RWPE1 (cell line): ENCODE measurements at regions of chr7 and their contacts with region 1.

Region 1: DNA sequence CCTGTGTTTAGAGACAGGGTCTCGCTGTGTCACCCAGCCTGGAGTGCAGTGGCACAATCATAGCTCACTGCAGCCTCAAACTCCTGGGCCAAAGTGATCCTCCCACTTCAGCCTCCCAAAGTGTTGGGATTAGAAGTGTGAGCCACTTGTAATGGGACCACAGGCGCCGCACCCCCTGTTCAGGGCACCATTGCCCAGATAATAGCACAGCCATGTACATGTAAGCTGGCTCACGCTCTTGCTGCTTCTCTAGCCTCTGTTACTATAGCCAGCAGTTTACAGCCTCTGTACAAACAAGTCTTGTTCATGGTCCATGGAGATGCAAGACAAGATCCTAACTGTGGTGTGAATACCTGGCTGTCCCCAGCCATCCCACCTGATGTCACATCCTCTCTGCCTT is 4.2 kb upstream of the MLXIPL start:
- DNase-seq: no peak
- H3K27ac ChIP-seq: no peak overlapping the region
- CTCF ChIP-seq: no peak

Region 2: DNA sequence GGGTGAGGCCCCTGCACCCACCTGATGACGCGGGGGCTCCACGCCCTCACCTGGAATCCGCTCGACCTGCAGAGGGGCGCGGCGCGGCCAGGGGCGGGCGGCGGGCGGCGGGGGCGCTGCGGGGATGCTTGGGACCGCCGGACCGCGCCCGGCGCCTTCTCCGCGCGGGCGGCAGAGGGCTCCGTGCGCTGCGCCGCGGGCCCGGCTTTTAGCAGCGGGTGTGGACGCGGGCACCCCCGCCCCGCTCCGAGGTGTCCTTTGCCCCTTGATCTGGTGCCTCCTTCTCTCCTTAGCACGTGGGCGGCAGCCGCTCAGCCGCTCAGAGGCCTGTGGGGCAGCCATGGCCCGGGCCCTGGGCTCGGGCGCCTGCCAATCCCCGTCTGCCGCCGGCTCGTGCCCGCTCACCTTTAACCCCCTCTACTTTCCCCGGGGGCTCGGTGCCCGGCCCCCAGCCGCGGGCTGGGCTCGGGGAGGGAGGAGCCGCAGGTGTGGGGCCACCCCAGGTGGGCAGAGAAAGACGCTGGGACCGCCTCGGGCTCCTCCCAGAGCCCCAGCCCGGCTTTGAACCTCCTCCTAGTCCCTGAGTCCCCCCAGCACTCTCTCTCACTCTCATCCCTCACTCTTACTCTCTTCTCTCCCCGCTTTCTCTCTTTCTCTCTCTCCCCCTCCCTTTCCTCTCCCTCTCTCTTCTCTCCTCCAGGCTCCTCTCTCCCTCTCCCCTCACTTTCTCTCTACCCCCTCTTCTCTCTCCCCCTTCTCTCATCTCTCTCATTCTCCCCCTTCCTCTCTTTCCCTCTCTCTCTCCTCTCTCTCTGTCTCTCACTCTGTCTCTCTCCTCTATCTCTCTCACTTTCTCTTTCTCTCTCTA is 19.5 kb after region 1 on chr7:
- CTCF ChIA-PET with region 1: interaction called, 10 read pairs
- POLR2A ChIA-PET with region 1: no interaction called
- DNase-seq: no peak
- H3K27ac ChIP-seq: no peak overlapping the region
- CTCF ChIP-seq: peak; percentile 63

Region 3: GRCh38 chr7:73667344-73668102 is 39.0 kb after region 1 on chr7 and contains the start of gene VPS37D:
- CTCF ChIA-PET with region 1: interaction called, 10 read pairs
- POLR2A ChIA-PET with region 1: interaction called, 3 read pairs
- DNase-seq: peak; percentile 95
- H3K27ac ChIP-seq: peak within 1 kb of the TSS; percentile 44; the same call in 1 of the 2 replicates
- CTCF ChIP-seq: peak; percentile 97

Region 4: GRCh38 chr7:73851410-73852234 is 223.1 kb after region 1 on chr7:
- CTCF ChIA-PET with region 1: no interaction called
- POLR2A ChIA-PET with region 1: no interaction called
- DNase-seq: peak; percentile 91
- H3K27ac ChIP-seq: peak overlapping the region; percentile 97
- CTCF ChIP-seq: no peak